ENCODE measurements at regions of chr16 and their contacts with region 1.

Region 1: GRCh38 chr16:17578921-17579874 is 108.4 kb upstream of the XYLT1 start:
- DNase-seq: peak; percentile 6 to 80 (median 46)
- ATAC-seq: peak; percentile 73
- H3K4me3 ChIP-seq: no peak overlapping the region
- H3K4me3 Mint-ChIP-seq: no peak overlapping the region
- H3K27ac ChIP-seq: no peak overlapping the region
- H3K27ac Mint-ChIP-seq: no peak overlapping the region
- H3K4me1 ChIP-seq: no peaks in the 10 kb centered on the region
- H3K4me1 Mint-ChIP-seq: no peaks in the 10 kb centered on the region
- H3K27me3 ChIP-seq: no peaks in the 10 kb centered on the region
- H3K27me3 Mint-ChIP-seq: peaks cover 5% of the 10 kb centered on the region
- CTCF ChIP-seq: peak; percentile 93

Region 2: GRCh38 chr16:17194190-17194780 is 384.9 kb before region 1 on chr16:
- CTCF ChIA-PET with region 1: interaction called, 4 read pairs
- POLR2A ChIA-PET with region 1: no interaction called
- intact Hi-C with region 1: loop called (anchors 5 kb)
- DNase-seq: peak; percentile 36 to 77 (median 50)
- ATAC-seq: no peak
- H3K4me3 ChIP-seq: no peak overlapping the region
- H3K4me3 Mint-ChIP-seq: no peak overlapping the region
- H3K27ac ChIP-seq: no peak overlapping the region
- H3K27ac Mint-ChIP-seq: no peak overlapping the region
- H3K4me1 ChIP-seq: no peaks in the 10 kb centered on the region
- H3K4me1 Mint-ChIP-seq: no peaks in the 10 kb centered on the region
- H3K27me3 ChIP-seq: no peaks in the 10 kb centered on the region
- H3K27me3 Mint-ChIP-seq: no peaks in the 10 kb centered on the region
- CTCF ChIP-seq: peak; percentile 73

Region 3: GRCh38 chr16:17350207-17350606 is 229.0 kb before region 1 on chr16:
- CTCF ChIA-PET with region 1: no interaction called
- POLR2A ChIA-PET with region 1: no interaction called
- intact Hi-C with region 1: loop called in 1 of 2 experiments (anchors 5 kb)
- DNase-seq: peak in 2 of 14 experiments; percentile 53 to 61
- ATAC-seq: no peak
- H3K4me3 ChIP-seq: no peak overlapping the region
- H3K4me3 Mint-ChIP-seq: no peak overlapping the region
- H3K27ac ChIP-seq: no peak overlapping the region
- H3K27ac Mint-ChIP-seq: no peak overlapping the region
- H3K4me1 ChIP-seq: peaks cover 60% of the 10 kb centered on the region
- H3K4me1 Mint-ChIP-seq: peaks cover 69% of the 10 kb centered on the region
- H3K27me3 ChIP-seq: no peaks in the 10 kb centered on the region
- H3K27me3 Mint-ChIP-seq: no peaks in the 10 kb centered on the region
- CTCF ChIP-seq: no peak

Measured in CD4-positive, alpha-beta T cell (primary cell).